Transverse colon (tissue), 4 donors: ENCODE measurements at regions of chr20 and their contacts with region 1.

Region 1: DNA sequence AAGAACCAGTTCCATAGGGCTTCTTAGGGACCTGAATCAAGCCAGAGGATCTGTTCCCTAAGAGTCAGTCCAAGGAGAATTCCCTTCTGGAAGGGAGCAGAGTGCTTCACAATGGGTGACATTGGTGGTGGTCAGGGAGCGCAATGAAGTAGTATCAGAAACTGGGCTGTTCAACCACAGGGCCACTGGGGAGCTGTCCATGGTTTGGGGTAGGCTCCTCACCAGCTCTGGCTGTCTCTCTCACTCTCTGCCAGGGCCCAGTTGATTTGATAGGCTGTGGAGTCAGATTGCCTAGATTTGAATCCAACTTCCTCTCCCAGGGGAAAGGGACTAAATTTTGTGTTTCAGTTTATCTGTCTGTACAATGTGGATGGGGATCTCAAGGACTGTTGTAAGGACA is 36.7 kb upstream of the CHD6 start:
- DNase-seq: no peak
- H3K4me3 ChIP-seq: no peak overlapping the region
- H3K27ac ChIP-seq: no peak overlapping the region
- H3K4me1 ChIP-seq: peaks cover 2 to 12% (median 6%) of the 10 kb centered on the region in 4 donors
- H3K27me3 ChIP-seq: no peaks in the 10 kb centered on the region
- CTCF ChIP-seq: no peak
- EP300 ChIP-seq: no peak
- POLR2A ChIP-seq: no peak

Region 2: DNA sequence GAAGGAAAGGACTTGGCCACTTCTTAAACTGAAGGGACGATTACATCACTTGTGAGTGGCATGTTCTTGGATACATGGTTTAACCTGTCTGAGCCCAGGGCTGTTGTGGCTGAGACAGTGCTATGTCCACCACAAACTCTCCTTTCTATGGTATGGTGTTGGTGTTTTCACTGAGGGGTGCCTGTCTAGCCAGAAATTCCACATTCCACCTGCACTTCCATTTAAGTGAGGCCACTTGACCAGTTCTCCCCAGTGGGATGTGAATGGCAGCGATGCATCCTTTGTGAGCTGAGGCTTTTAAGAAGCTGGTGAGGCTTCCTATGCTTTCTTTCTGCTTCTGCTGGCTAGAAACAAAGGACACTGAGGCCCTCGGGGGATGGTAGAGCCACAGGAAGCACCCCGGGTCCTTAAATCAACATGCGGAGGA is 114.7 kb after region 1 on chr20:
- in situ Hi-C with region 1: no loop called
- intact Hi-C with region 1: no loop called
- DNase-seq: no peak
- H3K4me3 ChIP-seq: no peak overlapping the region
- H3K27ac ChIP-seq: no peak overlapping the region
- H3K4me1 ChIP-seq: no peaks in the 10 kb centered on the region
- H3K27me3 ChIP-seq: no peaks in the 10 kb centered on the region
- CTCF ChIP-seq: no peak
- EP300 ChIP-seq: no peak
- POLR2A ChIP-seq: no peak

Region 3: GRCh38 chr20:42949950-42950349 is 1295.1 kb after region 1 on chr20:
- in situ Hi-C with region 1: no loop called
- intact Hi-C with region 1: loop called (anchors 5 kb)
- DNase-seq: no peak
- H3K4me3 ChIP-seq: no peak overlapping the region
- H3K27ac ChIP-seq: no peak overlapping the region
- H3K4me1 ChIP-seq: no peaks in the 10 kb centered on the region
- H3K27me3 ChIP-seq: no peaks in the 10 kb centered on the region
- CTCF ChIP-seq: no peak
- EP300 ChIP-seq: no peak
- POLR2A ChIP-seq: no peak